GM12878 (cell line): ENCODE measurements at regions of chr16 and their contacts with region 1.

Region 1: DNA sequence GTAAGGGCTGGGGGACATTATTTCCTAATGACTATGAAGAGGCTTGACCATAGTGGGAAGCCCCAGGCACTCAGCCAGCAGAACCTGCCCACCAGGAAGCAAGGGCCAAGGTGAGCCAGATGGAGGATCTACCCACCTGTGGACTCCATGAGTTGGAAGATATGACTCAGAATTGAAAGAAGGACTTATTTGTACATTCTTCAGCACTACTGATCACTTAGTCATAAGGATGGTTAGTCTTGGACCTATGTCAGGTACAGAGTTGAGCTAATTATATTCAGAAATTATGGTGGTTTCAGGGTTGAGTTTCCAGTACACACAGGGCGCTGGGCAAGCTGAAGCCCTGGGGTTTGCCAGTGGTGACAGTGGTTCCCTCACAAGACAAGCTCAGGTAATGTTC is 24.0 kb upstream of the GRIN2A start:
- DNase-seq: peak; percentile 27
- ATAC-seq: peak; percentile 94
- H3K4me3 ChIP-seq: no peak overlapping the region
- H3K27ac ChIP-seq: no peak overlapping the region
- H3K4me1 ChIP-seq: peaks cover 8% of the 10 kb centered on the region
- H3K27me3 ChIP-seq: no peaks in the 10 kb centered on the region
- CTCF ChIP-seq: no peak
- EP300 ChIP-seq: no peak; a peak in 1 of 4 replicates
- POLR2A ChIP-seq: no peak
- RAD21 ChIP-seq: no peak

Region 2: GRCh38 chr16:9922402-9922801 is 283.8 kb before region 1 on chr16:
- CTCF ChIA-PET with region 1: no interaction called
- POLR2A ChIA-PET with region 1: no interaction called
- RAD21 ChIA-PET with region 1: no interaction called
- SMC1A ChIA-PET with region 1: no interaction called
- in situ Hi-C with region 1: no loop called
- intact Hi-C with region 1: no loop called
- DNase-seq: no peak
- ATAC-seq: no peak
- H3K4me3 ChIP-seq: no peak overlapping the region
- H3K27ac ChIP-seq: no peak overlapping the region
- H3K4me1 ChIP-seq: peaks cover 5% of the 10 kb centered on the region; the same call in 1 of the 2 replicates
- H3K27me3 ChIP-seq: no peaks in the 10 kb centered on the region
- CTCF ChIP-seq: no peak
- EP300 ChIP-seq: no peak
- POLR2A ChIP-seq: no peak
- RAD21 ChIP-seq: no peak

Region 3: DNA sequence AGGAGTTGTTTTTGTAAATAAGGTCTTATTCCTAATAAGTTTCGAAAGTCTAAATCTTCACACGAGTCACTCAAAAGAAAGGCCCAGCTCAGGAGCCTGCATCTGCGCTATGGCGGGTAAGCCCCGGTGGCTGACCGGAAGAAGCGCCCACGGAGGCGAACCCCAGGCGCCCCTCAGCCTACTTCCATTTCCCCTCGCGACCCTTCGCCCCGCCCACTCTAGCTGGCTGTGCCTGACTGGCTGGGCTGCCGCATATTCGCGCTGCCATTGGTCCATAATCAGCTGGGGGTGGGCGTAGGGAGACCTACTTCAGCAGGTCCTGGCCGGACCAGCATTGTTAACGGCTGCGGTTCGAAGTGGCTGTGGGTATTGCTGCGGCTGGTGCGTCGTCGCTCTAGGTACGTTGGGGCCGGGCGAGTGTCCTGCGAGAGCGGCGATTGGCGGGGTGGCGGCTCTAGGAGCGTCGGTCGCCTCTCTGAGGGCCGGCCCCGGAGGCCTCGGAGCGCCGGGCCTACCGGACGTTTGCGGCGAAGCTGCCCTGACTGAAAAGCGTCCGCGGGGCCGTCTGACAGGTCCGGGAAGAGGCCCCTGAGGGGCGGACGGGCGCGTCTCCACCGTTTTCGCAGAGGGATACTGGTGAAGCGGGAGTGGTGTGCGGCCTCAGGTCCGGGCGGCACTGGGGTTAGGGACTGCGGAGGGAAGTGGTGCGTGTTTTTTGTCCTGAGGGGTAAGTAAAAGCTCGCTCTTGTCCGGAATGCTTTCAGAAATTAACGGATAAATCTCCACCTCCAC is 179.7 kb after region 1 on chr16 and contains the start of gene ATF7IP2:
- CTCF ChIA-PET with region 1: no interaction called
- POLR2A ChIA-PET with region 1: no interaction called
- RAD21 ChIA-PET with region 1: no interaction called
- SMC1A ChIA-PET with region 1: no interaction called
- in situ Hi-C with region 1: no loop called
- intact Hi-C with region 1: loop called (anchors 5 kb)
- DNase-seq: peak; percentile 80
- ATAC-seq: peak; percentile 97
- H3K4me3 ChIP-seq: peak within 1 kb of the TSS; percentile 80
- H3K27ac ChIP-seq: peak within 1 kb of the TSS; percentile 80
- H3K4me1 ChIP-seq: peaks cover 7% of the 10 kb centered on the region
- H3K27me3 ChIP-seq: no peaks in the 10 kb centered on the region
- CTCF ChIP-seq: no peak
- EP300 ChIP-seq: peak in 1 of 2 experiments; percentile 25; a peak in 1 of 4 replicates
- POLR2A ChIP-seq: peak; percentile 100
- RAD21 ChIP-seq: no peak
- polyA plus RNA-seq, gene ATF7IP2: 67.9 to 75.2 TPM